Cardiac septum (tissue), 1 donor: ENCODE measurements at regions of chr5 and their contacts with region 1.

Region 1: DNA sequence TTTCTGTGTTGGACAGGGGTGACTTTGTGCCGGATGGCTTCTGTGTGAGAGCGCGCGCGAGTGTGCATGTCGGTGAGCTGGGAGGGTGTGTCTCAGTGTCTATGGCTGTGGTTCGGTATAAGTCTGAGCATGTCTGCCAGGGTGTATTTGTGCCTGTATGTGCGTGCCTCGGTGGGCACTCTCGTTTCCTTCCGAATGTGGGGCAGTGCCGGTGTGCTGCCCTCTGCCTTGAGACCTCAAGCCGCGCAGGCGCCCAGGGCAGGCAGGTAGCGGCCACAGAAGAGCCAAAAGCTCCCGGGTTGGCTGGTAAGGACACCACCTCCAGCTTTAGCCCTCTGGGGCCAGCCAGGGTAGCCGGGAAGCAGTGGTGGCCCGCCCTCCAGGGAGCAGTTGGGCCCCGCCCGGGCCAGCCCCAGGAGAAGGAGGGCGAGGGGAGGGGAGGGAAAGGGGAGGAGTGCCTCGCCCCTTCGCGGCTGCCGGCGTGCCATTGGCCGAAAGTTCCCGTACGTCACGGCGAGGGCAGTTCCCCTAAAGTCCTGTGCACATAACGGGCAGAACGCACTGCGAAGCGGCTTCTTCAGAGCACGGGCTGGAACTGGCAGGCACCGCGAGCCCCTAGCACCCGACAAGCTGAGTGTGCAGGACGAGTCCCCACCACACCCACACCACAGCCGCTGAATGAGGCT is at the start of gene ADRB2:
- DNase-seq: peak; percentile 99
- total RNA-seq, gene ADRB2: 2.6 TPM

Region 2: GRCh38 chr5:148794729-148795561 is 31.3 kb before region 1 on chr5:
- intact Hi-C with region 1: no loop called
- DNase-seq: no peak

Region 3: GRCh38 chr5:148864113-148864841 is 38.1 kb after region 1 on chr5:
- intact Hi-C with region 1: loop called (anchors 5 kb)
- DNase-seq: no peak

Region 4: DNA sequence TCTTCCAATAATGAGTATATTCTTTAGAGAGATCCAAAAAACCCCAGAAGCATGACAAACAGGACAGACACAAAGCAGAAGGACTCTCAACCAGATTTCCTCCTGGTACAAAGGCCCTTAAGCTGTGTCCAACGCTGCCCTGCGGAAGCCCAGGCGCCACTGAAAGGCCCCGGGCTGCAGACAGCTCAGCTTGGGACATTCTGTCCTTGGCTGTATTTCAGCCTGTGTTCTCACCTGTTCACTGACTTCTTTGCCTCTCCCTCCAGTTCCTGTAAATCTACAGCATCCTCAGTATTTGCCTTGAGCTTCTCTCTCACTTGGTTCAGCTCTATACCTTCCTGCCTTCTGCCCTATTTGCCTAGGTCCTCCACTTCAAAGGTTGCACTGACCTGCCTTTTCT is 140.2 kb after region 1 on chr5:
- intact Hi-C with region 1: loop called (anchors 5 kb)
- DNase-seq: no peak

Region 5: GRCh38 chr5:149035372-149035790 is 209.2 kb after region 1 on chr5:
- intact Hi-C with region 1: loop called (anchors 10 kb)
- DNase-seq: peak; percentile 89